SK-N-SH (cell line): ENCODE measurements at regions of chr1 and their contacts with region 1.

Region 1: DNA sequence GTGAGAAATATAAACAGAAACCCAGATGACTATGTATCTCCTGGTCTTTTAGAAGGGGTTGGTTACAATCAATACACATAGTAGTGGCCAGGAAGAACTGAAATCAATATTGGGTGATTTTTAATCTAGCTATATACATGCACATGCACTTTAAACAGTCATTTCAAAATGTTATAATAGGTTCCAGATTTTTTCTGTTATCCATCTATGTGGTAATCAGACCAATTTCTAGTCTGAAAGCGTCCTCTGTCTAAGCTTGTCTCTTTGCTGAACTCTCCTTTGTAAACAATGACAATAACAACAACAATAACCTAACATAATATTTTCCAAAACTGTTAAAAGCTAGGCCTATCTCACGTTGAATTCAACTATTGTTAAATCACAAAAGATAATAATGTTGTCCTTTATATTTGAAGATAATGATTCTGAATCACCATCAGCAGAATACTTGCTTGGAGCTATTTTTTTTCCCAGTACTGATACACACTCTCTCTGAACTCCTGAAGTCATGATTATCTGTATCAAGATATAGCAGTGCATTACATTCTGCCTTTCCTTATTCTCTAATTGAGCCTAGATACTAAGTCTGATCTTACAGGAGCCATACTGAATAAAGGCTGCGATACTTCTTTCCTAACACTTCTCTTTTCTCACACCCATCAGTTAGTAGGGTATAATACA is 496.8 kb upstream of the ZRANB2 start:
- DNase-seq: peak; percentile 16
- H3K4me3 ChIP-seq: no peak overlapping the region
- H3K27ac ChIP-seq: peak overlapping the region in 1 of 2 experiments; percentile 60; a peak in 2 of 4 replicates
- H3K4me1 ChIP-seq: peaks cover 0 to 9% of the 10 kb centered on the region in 2 experiments; a peak in 2 of 4 replicates
- H3K27me3 ChIP-seq: no peaks in the 10 kb centered on the region
- CTCF ChIP-seq: no peak
- EP300 ChIP-seq: no peak
- RAD21 ChIP-seq: no peak

Region 2: GRCh38 chr1:71587961-71588360 is 10.4 kb after region 1 on chr1:
- CTCF ChIA-PET with region 1: interaction called, 12 read pairs
- POLR2A ChIA-PET with region 1: no interaction called
- DNase-seq: no peak
- H3K4me3 ChIP-seq: no peak overlapping the region
- H3K27ac ChIP-seq: no peak overlapping the region
- H3K4me1 ChIP-seq: no peaks in the 10 kb centered on the region; a peak in 1 of 4 replicates
- H3K27me3 ChIP-seq: no peaks in the 10 kb centered on the region
- CTCF ChIP-seq: peak; percentile 48
- EP300 ChIP-seq: no peak
- RAD21 ChIP-seq: peak; percentile 81